ENCODE measurements at regions of chr3 and their contacts with region 1.

Region 1: GRCh38 chr3:141561426-141562034 is 74.7 kb downstream of the RASA2 start:
- DNase-seq: peak; percentile 45
- ATAC-seq: peak; percentile 60
- H3K4me3 Mint-ChIP-seq: no peak overlapping the region
- H3K27ac Mint-ChIP-seq: peak overlapping the region; percentile 63
- H3K4me1 Mint-ChIP-seq: peaks cover 26% of the 10 kb centered on the region
- H3K27me3 Mint-ChIP-seq: no peaks in the 10 kb centered on the region
- CTCF ChIP-seq: peak; percentile 98

Region 2: DNA sequence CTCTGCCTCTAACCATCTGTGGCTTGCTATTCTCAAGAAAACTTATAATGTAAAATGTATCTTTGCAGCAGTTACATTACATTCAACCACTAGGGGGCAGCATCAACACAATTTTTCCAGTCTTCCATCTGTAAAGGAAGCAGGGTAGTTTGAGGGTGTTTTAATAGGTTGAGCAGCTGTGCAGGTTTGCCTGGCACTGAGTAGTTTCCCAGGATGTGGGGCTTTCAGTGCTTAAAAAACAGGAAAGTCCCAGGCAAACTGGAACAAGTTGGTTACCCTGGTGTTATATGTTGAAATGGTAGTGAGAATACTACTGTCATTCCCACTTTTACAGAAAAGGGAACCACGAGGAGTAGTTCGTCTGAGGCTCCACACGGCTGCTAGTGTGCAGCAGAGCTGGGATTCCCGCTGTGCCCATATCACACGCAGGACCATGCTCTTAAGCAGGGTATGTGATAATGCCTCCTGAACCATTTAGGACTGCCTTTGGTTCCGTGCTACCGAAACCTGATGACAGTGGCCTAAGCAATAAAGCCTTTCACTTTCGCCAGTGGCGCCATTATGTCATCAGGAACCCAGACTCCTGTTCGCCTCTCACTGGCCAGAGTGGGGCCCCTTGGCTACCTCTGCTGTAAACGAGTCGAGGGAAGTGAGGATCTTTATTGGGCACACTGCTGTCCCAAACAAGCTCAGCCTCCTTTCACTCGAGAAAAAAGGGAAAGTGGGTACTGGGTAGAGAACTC is 257.9 kb before region 1 on chr3:
- CTCF ChIA-PET with region 1: interaction called, 27 read pairs
- POLR2A ChIA-PET with region 1: no interaction called
- intact Hi-C with region 1: loop called (anchors 10 kb)
- DNase-seq: peak; percentile 74
- ATAC-seq: peak; percentile 35
- H3K4me3 Mint-ChIP-seq: no peak overlapping the region
- H3K27ac Mint-ChIP-seq: no peak overlapping the region
- H3K4me1 Mint-ChIP-seq: peaks cover 47% of the 10 kb centered on the region
- H3K27me3 Mint-ChIP-seq: no peaks in the 10 kb centered on the region
- CTCF ChIP-seq: peak; percentile 91

Region 3: GRCh38 chr3:141465221-141465620 is 96.3 kb before region 1 on chr3:
- CTCF ChIA-PET with region 1: interaction called, 265 read pairs
- POLR2A ChIA-PET with region 1: interaction called, 4 read pairs
- intact Hi-C with region 1: loop called (anchors 1 kb)
- DNase-seq: no peak
- ATAC-seq: no peak
- H3K4me3 Mint-ChIP-seq: no peak overlapping the region
- H3K27ac Mint-ChIP-seq: no peak overlapping the region
- H3K4me1 Mint-ChIP-seq: peaks cover 9% of the 10 kb centered on the region
- H3K27me3 Mint-ChIP-seq: no peaks in the 10 kb centered on the region
- CTCF ChIP-seq: no peak

Region 4: DNA sequence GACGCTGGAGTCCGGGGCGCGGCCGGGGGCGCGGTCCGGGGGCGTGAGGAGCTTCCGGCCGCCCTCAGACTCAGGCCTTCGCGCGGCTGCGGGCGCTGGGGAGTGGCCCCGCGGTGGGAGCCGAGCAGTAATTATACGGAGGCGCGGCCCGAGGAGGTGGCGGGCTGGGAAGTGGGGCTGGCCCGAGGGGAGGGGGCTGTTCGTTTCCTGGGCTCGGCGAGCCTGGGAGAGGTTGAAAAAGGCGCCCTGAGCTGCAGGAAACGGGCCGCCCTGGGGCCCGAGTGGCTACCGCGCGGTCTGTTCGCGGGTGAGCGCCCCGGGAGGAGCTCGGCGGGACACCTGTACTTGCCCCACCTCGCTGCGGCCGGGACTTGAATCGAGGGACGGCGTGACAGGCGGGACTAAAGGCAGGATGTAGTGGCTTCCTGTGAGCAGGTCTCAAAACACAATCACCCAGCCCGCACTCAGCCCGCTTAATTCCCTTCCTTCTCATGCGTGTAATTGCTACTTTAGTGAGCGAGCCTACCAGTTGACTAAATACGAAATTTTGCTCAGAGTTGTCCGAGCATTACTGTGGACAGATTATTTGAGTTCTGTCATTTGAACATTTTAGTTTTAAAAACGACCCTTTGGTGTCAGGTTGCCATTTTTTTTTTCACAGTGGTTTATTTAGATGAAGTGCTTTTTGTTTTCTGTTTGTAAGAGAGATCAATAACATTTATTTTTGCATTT is 73.8 kb before region 1 on chr3:
- CTCF ChIA-PET with region 1: interaction called, 74 read pairs
- POLR2A ChIA-PET with region 1: interaction called, 99 read pairs
- intact Hi-C with region 1: no loop called
- DNase-seq: peak; percentile 95
- ATAC-seq: peak; percentile 66
- H3K4me3 Mint-ChIP-seq: peak overlapping the region; percentile 87
- H3K27ac Mint-ChIP-seq: peak overlapping the region; percentile 99
- H3K4me1 Mint-ChIP-seq: peaks cover 64% of the 10 kb centered on the region
- H3K27me3 Mint-ChIP-seq: no peaks in the 10 kb centered on the region
- CTCF ChIP-seq: no peak

Region 5: DNA sequence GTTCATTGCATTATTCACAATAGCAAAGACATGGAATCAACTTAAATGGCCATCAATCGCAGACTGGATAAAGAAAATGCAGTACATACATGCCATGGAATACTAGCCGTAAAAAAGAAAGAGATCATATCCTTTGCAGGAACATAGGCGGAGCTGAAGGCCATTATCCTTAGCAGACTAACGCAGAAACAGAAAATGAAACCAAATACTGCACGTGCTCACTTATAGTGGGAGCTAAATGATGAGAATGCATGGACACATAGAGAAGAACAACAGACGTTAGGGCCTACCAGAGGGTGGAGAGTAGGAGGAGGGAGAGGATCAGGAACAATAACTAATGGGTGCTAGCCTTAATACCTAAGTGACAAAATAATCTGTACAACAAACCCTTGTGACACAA is 16.8 kb before region 1 on chr3:
- CTCF ChIA-PET with region 1: interaction called, 13 read pairs
- POLR2A ChIA-PET with region 1: interaction called, 6 read pairs
- intact Hi-C with region 1: no loop called
- DNase-seq: no peak
- ATAC-seq: peak; percentile 52
- H3K4me3 Mint-ChIP-seq: peak overlapping the region; percentile 18
- H3K27ac Mint-ChIP-seq: peak overlapping the region; percentile 87
- H3K4me1 Mint-ChIP-seq: peaks cover 83% of the 10 kb centered on the region
- H3K27me3 Mint-ChIP-seq: no peaks in the 10 kb centered on the region
- CTCF ChIP-seq: no peak

Region 6: DNA sequence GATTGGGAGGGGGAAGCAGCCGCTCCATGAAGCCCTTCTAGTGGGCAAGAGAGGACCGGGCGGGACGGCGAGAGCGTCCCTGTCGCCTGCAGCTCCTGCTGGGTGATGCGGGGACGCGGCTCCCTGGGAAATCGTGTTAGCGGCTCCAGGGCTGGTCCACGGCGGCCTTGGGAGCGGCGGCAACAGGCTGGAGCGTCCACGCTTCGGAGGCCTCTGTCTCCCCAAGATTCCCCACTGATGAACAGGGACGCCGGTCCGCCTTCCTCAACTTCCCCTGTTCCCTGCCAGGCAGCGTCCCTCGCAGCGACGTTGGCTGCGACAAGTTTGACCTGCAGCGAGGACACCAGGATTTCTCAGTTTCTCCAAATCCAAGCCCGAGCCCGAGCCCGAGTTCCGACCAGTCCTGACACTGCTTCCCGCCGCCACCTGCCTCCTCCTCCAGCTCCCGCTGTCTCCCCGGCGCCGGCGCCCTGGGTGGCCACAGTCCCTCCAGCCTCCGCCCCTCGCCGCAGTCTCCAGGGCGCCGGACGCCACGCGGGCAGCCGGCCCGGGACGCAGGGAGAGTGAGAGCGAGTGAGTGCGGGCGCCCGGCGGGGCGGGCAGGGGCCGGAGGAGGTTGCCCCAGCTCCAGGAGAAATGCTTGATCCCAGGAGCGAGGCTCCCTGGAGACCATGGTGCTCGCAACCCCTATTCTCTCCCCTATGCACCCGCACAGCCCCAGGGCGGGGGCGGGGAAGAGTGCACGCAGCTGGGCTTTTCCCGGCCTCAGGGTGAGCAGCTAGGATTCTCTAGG is 98.5 kb after region 1 on chr3:
- CTCF ChIA-PET with region 1: no interaction called
- POLR2A ChIA-PET with region 1: no interaction called
- intact Hi-C with region 1: no loop called
- DNase-seq: no peak
- ATAC-seq: no peak
- H3K4me3 Mint-ChIP-seq: peak overlapping the region; percentile 55
- H3K27ac Mint-ChIP-seq: no peak overlapping the region
- H3K4me1 Mint-ChIP-seq: peaks cover 5% of the 10 kb centered on the region
- H3K27me3 Mint-ChIP-seq: peaks cover 48% of the 10 kb centered on the region
- CTCF ChIP-seq: no peak